HepG2 (cell line): ENCODE measurements at regions of chr14 and their contacts with region 1.

Region 1: DNA sequence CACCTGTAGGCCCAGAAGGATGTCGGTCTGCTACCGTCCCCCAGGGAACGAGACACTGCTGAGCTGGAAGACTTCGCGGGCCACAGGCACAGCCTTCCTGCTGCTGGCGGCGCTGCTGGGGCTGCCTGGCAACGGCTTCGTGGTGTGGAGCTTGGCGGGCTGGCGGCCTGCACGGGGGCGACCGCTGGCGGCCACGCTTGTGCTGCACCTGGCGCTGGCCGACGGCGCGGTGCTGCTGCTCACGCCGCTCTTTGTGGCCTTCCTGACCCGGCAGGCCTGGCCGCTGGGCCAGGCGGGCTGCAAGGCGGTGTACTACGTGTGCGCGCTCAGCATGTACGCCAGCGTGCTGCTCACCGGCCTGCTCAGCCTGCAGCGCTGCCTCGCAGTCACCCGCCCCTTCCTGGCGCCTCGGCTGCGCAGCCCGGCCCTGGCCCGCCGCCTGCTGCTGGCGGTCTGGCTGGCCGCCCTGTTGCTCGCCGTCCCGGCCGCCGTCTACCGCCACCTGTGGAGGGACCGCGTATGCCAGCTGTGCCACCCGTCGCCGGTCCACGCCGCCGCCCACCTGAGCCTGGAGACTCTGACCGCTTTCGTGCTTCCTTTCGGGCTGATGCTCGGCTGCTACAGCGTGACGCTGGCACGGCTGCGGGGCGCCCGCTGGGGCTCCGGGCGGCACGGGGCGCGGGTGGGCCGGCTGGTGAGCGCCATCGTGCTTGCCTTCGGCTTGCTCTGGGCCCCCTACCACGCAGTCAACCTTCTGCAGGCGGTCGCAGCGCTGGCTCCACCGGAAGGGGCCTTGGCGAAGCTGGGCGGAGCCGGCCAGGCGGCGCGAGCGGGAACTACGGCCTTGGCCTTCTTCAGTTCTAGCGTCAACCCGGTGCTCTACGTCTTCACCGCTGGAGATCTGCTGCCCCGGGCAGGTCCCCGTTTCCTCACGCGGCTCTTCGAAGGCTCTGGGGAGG is at the start of gene LTB4R:
- DNase-seq: no peak
- ATAC-seq: no peak
- H3K4me3 ChIP-seq: no peak within 1 kb of the TSS
- H3K27ac ChIP-seq: peak within 1 kb of the TSS; percentile 4
- H3K4me1 ChIP-seq: peaks cover 61% of the 10 kb centered on the region
- H3K27me3 ChIP-seq: no peaks in the 10 kb centered on the region; a peak in 1 of 5 replicates
- CTCF ChIP-seq: no peak
- EP300 ChIP-seq: no peak
- POLR2A ChIP-seq: no peak
- RAD21 ChIP-seq: no peak
- total RNA-seq, gene LTB4R: 1.00 and 3.2 TPM in 2 replicates

Region 2: DNA sequence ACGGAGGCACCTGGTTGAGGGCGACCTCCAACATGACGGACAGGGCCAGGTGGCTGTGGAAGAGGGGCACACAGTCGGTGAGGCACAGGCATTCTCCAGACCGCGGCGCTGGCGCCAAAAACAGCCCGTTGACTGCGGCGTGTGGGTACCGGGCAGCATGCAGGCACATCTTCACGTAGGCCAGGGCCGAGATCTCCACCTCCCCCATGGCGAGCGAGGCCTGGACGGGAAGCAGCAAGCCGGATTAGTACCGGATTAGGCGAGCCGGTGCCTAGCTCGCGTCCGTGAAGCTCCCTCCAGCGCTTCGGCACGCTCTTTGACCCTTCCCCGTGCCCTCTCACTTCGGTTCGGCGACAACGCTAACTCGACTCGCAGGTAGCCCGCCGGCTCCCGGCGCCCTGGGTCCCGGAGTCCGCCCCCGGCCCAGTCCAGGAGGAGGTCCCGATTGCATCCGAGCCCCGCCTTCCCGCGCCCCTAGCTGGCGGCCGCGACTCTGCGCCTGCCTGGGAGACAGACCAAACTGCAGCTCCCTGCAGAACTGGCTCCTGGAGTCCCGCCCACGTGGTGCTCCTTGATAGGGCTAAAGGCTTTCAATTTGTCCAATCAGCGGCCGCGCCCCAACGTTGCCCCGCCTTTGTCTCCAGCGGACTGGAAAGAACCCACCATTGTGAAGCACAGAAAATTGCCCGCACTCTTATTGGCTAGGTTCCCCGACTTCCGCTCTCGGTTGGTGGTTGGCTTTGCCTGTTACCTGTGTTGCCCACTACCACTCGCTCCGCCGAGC is 169.6 kb before region 1 on chr14 and contains the start of gene EMC9:
- CTCF ChIA-PET with region 1: no interaction called
- POLR2A ChIA-PET with region 1: interaction called, 30 read pairs
- in situ Hi-C with region 1: no loop called
- intact Hi-C with region 1: no loop called
- DNase-seq: peak; percentile 100
- ATAC-seq: peak; percentile 88
- H3K4me3 ChIP-seq: peak within 1 kb of the TSS; percentile 83 to 99 (median 95)
- H3K27ac ChIP-seq: peak within 1 kb of the TSS; percentile 86
- H3K4me1 ChIP-seq: peaks cover 77% of the 10 kb centered on the region
- H3K27me3 ChIP-seq: peaks cover 0 to 3% of the 10 kb centered on the region in 2 experiments; a peak in 1 of 5 replicates
- CTCF ChIP-seq: peak; percentile 53
- EP300 ChIP-seq: peak in 1 of 2 experiments; percentile 70; a peak in 2 of 4 replicates
- POLR2A ChIP-seq: peak in 1 of 2 experiments; percentile 88; a peak in 2 of 4 replicates
- RAD21 ChIP-seq: peak; percentile 84
- total RNA-seq, gene EMC9: 71.2 and 78.7 TPM in 2 replicates

Region 3: GRCh38 chr14:24251880-24252288 is 59.0 kb before region 1 on chr14:
- CTCF ChIA-PET with region 1: no interaction called
- POLR2A ChIA-PET with region 1: interaction called, 850 read pairs
- in situ Hi-C with region 1: no loop called
- intact Hi-C with region 1: no loop called
- DNase-seq: no peak
- ATAC-seq: peak; percentile 32
- H3K4me3 ChIP-seq: no peak overlapping the region
- H3K27ac ChIP-seq: peak overlapping the region; percentile 59
- H3K4me1 ChIP-seq: peaks cover 35% of the 10 kb centered on the region
- H3K27me3 ChIP-seq: no peaks in the 10 kb centered on the region
- CTCF ChIP-seq: no peak
- EP300 ChIP-seq: no peak
- POLR2A ChIP-seq: 0 out of 4 replicates have a peak, but pooled peaks of 1 of the 2 experiments have one; percentile 2
- RAD21 ChIP-seq: no peak

Region 4: GRCh38 chr14:24425704-24426103 is 114.8 kb after region 1 on chr14:
- CTCF ChIA-PET with region 1: no interaction called
- POLR2A ChIA-PET with region 1: interaction called, 35 read pairs
- in situ Hi-C with region 1: no loop called
- intact Hi-C with region 1: no loop called
- DNase-seq: peak; percentile 63
- ATAC-seq: no peak
- H3K4me3 ChIP-seq: no peak overlapping the region
- H3K27ac ChIP-seq: no peak overlapping the region
- H3K4me1 ChIP-seq: peaks cover 74% of the 10 kb centered on the region
- H3K27me3 ChIP-seq: no peaks in the 10 kb centered on the region; a peak in 2 of 5 replicates
- CTCF ChIP-seq: no peak
- EP300 ChIP-seq: no peak
- POLR2A ChIP-seq: no peak
- RAD21 ChIP-seq: no peak